Activated CD4-positive, alpha-beta T cell treated with anti-CD3 and anti-CD28 coated beads for 36 hours (primary cell): ENCODE measurements at regions of chr1 and their contacts with region 1.

Region 1: DNA sequence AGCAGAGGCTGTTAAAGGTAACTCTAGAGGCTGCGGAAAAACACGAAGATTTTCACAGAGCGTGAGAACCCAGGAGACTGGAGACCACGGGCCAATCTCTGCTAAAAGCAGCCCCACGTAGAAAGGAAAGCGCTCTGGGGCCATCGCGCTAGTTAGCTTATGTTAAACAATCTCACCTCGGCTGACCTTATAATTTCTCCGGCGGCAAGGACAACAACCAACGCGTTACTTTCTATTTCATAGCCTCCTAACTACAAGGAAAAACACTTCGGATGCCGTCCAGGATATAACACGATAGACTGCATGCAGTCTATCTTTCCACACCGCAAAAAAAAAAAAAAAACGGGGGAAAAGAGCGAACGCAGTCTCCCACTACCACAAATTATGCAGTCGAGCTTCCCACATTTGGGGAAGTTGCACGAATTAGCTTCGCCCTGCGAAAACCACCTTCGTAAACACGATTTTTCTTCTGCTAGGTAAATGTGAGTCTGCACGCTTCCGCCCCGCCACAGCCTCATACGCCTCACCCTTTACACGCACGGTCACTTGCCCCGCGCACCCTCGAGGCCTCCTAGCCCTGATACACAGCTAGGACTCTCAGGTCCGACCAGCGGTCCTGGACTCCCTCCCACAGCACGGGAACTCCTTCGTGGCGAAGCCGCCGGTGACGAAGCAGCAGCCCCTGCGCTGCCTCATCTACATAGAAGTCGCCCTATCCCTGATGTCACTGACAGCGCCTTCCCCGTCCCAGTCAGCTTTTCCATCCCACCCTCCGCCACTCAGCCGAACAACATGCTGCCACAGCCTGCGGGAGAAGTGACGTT is 87.8 kb downstream of the PRKAB2 start:
- DNase-seq: peak; percentile 95
- ATAC-seq: peak; percentile 88
- H3K4me3 Mint-ChIP-seq: peak overlapping the region; percentile 80
- H3K27ac Mint-ChIP-seq: peak overlapping the region; percentile 100
- H3K4me1 Mint-ChIP-seq: peaks cover 29% of the 10 kb centered on the region
- H3K27me3 Mint-ChIP-seq: peaks cover 44% of the 10 kb centered on the region

Region 2: GRCh38 chr1:147046189-147046862 is 38.2 kb before region 1 on chr1:
- CTCF ChIA-PET with region 1: interaction called, 4 read pairs
- POLR2A ChIA-PET with region 1: interaction called, 12 read pairs
- intact Hi-C with region 1: loop called (anchors 2 kb)
- DNase-seq: no peak
- ATAC-seq: peak; percentile 74
- H3K4me3 Mint-ChIP-seq: no peak overlapping the region
- H3K27ac Mint-ChIP-seq: peak overlapping the region; percentile 74
- H3K4me1 Mint-ChIP-seq: peaks cover 37% of the 10 kb centered on the region
- H3K27me3 Mint-ChIP-seq: peaks cover 9% of the 10 kb centered on the region

Region 3: DNA sequence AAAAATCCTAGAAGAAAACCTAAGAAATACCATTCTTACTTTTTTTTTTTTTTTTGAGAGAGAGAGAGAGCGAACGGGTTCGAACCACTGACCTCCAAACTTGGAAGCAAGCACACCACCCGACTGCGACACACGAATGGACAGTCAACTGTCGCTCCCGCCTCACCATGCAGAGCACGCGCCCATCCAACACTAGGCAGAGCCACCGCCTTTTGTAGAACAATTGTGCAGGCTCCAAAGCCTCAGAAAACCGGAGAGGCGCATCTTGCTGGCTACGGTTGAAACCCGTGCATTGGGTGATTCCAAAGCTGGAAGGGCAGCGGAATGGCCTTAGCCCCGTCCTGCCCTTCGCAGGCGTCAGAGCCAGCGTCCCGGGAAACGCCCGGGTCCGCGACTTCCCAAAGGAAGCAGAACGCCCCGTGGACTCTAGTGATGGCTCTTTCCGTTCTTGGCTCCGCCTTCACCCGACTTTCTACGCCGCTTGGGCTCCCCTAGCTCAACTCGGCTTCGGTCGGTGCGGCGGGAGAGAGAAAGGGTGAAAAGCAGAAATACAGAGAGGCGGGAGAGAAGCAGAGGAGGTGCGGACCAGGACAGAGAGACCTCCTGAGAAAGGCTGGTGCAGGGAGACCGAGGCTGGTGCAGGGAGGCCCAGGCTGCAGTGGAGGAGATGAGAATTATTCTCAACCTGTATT is 12.0 kb before region 1 on chr1:
- CTCF ChIA-PET with region 1: no interaction called
- POLR2A ChIA-PET with region 1: interaction called, 16 read pairs
- intact Hi-C with region 1: loop called in 1 of 2 experiments (anchors 1 kb)
- DNase-seq: peak; percentile 54
- ATAC-seq: peak; percentile 76
- H3K4me3 Mint-ChIP-seq: peak overlapping the region; percentile 66
- H3K27ac Mint-ChIP-seq: peak overlapping the region; percentile 44
- H3K4me1 Mint-ChIP-seq: peaks cover 27% of the 10 kb centered on the region
- H3K27me3 Mint-ChIP-seq: peaks cover 43% of the 10 kb centered on the region

Region 4: GRCh38 chr1:147172168-147172992 is 87.9 kb after region 1 on chr1 and contains the start of gene PRKAB2:
- CTCF ChIA-PET with region 1: interaction called, 4 read pairs
- POLR2A ChIA-PET with region 1: interaction called, 20 read pairs
- intact Hi-C with region 1: loop called (anchors 1 to 5 kb)
- DNase-seq: peak; percentile 94
- ATAC-seq: peak; percentile 92
- H3K4me3 Mint-ChIP-seq: peak within 1 kb of the TSS; percentile 95
- H3K27ac Mint-ChIP-seq: peak within 1 kb of the TSS; percentile 96
- H3K4me1 Mint-ChIP-seq: peaks cover 29% of the 10 kb centered on the region
- H3K27me3 Mint-ChIP-seq: no peaks in the 10 kb centered on the region
- total RNA-seq, gene PRKAB2: 4.8 to 7.0 TPM

Region 5: DNA sequence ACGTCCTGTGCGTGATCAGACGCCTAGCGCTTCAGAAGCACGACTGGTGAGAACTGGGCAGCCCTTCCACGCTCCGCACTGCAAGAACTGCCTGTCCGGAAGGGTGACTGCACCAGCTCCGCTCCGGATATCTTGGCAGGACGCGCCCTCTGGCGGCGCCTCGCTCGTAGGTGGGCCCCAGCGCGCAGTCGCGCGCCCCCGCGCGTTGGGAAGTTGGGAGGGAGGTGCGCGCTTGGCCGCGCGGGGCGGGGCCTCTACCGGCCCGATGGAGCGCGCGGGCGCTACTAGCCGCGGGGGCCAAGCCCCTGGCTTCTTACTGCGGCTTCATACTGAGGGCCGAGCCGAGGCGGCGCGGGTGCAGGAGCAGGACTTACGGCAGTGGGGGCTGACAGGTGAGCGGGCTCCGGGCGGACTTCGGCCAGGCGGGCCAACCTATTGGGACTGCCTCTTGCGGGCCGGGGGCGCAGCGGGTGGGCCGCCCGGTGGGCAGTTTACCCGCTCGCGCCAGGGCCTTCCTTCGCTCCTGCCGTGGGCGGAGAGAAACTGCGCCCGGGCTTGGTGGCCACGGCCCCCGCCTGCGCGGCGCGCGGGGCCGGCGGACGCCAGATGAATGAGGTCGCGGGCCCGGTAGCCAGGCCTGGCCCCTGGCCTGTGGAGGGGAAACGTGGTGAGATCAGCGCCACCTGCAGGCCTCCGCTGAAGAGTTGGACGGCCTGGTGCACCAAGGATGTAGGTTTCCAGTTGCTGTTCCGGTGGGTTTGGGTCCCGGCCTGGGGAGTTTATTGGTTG is 158.1 kb after region 1 on chr1 and contains the start of gene CHD1L:
- CTCF ChIA-PET with region 1: interaction called, 8 read pairs
- POLR2A ChIA-PET with region 1: interaction called, 31 read pairs
- intact Hi-C with region 1: loop called (anchors 1 to 2 kb)
- DNase-seq: peak; percentile 97
- ATAC-seq: peak; percentile 88
- H3K4me3 Mint-ChIP-seq: peak within 1 kb of the TSS; percentile 94
- H3K27ac Mint-ChIP-seq: peak within 1 kb of the TSS; percentile 77
- H3K4me1 Mint-ChIP-seq: peaks cover 36% of the 10 kb centered on the region
- H3K27me3 Mint-ChIP-seq: no peaks in the 10 kb centered on the region
- total RNA-seq, gene CHD1L: 56.1 to 69.2 TPM

Region 6: DNA sequence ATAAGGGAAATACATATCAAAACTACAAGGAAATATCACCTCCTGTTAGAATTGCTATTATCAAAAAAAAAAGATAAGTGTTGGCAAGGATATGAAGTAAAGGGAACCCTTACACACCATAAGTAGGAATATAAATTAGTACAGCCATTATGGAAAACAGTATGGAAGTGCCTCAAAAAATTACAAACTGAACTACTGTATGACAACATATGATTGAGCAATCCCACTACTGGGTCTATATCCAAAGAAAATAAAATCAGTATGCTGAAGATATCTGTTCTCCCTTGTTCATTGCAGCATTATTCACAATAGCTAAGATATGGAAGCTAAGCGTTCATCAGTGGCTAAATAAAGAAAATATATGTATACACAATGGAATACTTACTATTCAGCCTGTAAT is 217.8 kb after region 1 on chr1:
- CTCF ChIA-PET with region 1: no interaction called
- POLR2A ChIA-PET with region 1: no interaction called
- intact Hi-C with region 1: no loop called
- DNase-seq: no peak
- ATAC-seq: no peak
- H3K4me3 Mint-ChIP-seq: no peak overlapping the region
- H3K27ac Mint-ChIP-seq: no peak overlapping the region
- H3K4me1 Mint-ChIP-seq: no peaks in the 10 kb centered on the region
- H3K27me3 Mint-ChIP-seq: no peaks in the 10 kb centered on the region

Region 7: GRCh38 chr1:147545133-147545532 is 460.6 kb after region 1 on chr1:
- CTCF ChIA-PET with region 1: no interaction called
- POLR2A ChIA-PET with region 1: interaction called, 6 read pairs
- intact Hi-C with region 1: loop called in 1 of 2 experiments (anchors 2 kb)
- DNase-seq: peak; percentile 95
- ATAC-seq: peak; percentile 77
- H3K4me3 Mint-ChIP-seq: peak overlapping the region; percentile 13
- H3K27ac Mint-ChIP-seq: peak overlapping the region; percentile 68
- H3K4me1 Mint-ChIP-seq: peaks cover 70% of the 10 kb centered on the region
- H3K27me3 Mint-ChIP-seq: no peaks in the 10 kb centered on the region

Region 8: GRCh38 chr1:148263128-148263905 is 1178.8 kb after region 1 on chr1:
- CTCF ChIA-PET with region 1: interaction called, 3 read pairs
- POLR2A ChIA-PET with region 1: interaction called, 41 read pairs
- intact Hi-C with region 1: no loop called
- DNase-seq: peak; percentile 83
- ATAC-seq: peak; percentile 93
- H3K4me3 Mint-ChIP-seq: peak overlapping the region; percentile 75
- H3K27ac Mint-ChIP-seq: peak overlapping the region; percentile 99
- H3K4me1 Mint-ChIP-seq: peaks cover 21% of the 10 kb centered on the region
- H3K27me3 Mint-ChIP-seq: no peaks in the 10 kb centered on the region